ENCODE measurements at regions of chr3 and their contacts with region 1.

Region 1: DNA sequence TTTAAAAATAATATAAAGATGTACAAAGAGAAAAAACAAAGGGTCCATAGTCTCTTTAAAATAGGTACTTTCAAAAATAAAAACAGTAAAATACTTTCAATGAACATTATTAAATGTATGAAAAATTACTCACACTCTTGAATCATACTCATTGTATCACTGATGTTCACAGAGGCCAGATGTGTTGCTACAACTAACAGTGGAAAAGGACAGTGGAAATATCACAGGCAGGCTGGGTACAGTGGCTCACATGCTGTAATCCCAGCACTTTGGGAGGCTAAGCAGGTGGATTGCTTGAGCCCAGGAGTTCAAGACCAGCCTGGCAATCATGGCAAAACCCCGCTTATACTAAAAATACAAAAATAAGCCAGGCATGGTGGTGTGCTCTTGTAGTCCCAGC is 26.8 kb downstream of the NPHP3 start:
- DNase-seq: no peak
- H3K4me3 ChIP-seq: no peak overlapping the region
- H3K27ac ChIP-seq: no peak overlapping the region
- H3K4me1 ChIP-seq: no peaks in the 10 kb centered on the region
- H3K27me3 ChIP-seq: no peaks in the 10 kb centered on the region
- CTCF ChIP-seq: no peak
- EP300 ChIP-seq: no peak
- POLR2A ChIP-seq: no peak

Region 2: DNA sequence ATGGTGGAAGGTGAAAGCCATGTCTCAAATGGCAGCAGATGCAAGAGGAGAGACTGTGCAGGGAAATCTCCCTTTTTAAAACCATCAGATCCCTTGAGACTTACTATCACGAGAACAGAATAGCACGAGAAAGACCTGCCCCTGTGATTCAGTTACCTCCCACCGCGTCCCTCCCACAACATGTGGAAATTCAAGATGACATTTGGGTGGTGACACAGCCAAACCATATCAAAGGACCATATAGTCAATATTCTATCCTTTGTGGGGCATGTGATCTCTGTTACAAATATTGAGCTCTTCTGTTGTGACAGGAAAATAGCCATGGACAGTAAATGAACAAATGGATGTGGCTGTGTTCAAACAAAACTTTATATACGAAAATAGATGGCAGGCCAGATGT is 175.5 kb before region 1 on chr3:
- intact Hi-C with region 1: loop called (anchors 10 kb)
- DNase-seq: no peak
- H3K4me3 ChIP-seq: no peak overlapping the region
- H3K27ac ChIP-seq: no peak overlapping the region
- H3K4me1 ChIP-seq: no peaks in the 10 kb centered on the region
- H3K27me3 ChIP-seq: no peaks in the 10 kb centered on the region
- CTCF ChIP-seq: no peak
- EP300 ChIP-seq: no peak
- POLR2A ChIP-seq: no peak